ENCODE measurements at regions of chr5 and their contacts with region 1.

Region 1: DNA sequence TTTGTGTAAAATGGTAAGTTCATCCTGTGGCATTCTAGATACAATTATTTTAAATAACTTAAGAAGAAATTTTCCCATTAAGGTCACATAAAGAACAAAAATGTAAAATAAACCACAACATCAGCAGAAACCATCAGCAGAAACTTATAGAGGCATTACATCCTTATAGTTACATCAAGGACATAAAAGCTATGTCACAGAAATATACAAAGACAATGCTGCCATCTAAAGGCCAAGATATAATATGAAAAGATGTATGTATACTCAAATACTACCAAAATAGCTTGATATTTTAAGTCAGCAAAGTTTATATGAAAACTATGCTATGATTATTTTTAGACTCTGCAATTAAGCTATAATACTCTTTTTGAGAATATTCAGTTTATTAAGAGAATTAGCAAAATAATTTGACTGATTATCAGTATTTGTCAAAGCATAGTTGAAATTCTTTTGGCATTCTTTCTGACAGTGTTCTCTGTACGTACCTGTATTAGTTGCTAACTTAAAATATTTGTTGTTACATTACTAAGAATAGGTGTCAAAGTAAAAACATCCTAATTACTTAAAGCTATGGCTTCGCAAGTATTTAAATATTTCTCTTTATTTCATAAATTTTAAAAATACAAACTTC is 36.2 kb downstream of the FBXL17 start:
- DNase-seq: no peak
- H3K4me3 Mint-ChIP-seq: no peak overlapping the region
- H3K27ac Mint-ChIP-seq: no peak overlapping the region
- H3K4me1 Mint-ChIP-seq: no peaks in the 10 kb centered on the region
- H3K27me3 Mint-ChIP-seq: no peaks in the 10 kb centered on the region

Region 2: GRCh38 chr5:107673368-107674136 is 672.1 kb before region 1 on chr5:
- intact Hi-C with region 1: loop called (anchors 10 kb)
- DNase-seq: peak; percentile 44
- H3K4me3 Mint-ChIP-seq: peak overlapping the region; percentile 68
- H3K27ac Mint-ChIP-seq: peak overlapping the region; percentile 32
- H3K4me1 Mint-ChIP-seq: peaks cover 22% of the 10 kb centered on the region
- H3K27me3 Mint-ChIP-seq: peaks cover 63% of the 10 kb centered on the region

Region 3: GRCh38 chr5:108148715-108149139 is 196.9 kb before region 1 on chr5:
- intact Hi-C with region 1: loop called (anchors 5 kb)
- DNase-seq: no peak
- H3K4me3 Mint-ChIP-seq: no peak overlapping the region
- H3K27ac Mint-ChIP-seq: no peak overlapping the region
- H3K4me1 Mint-ChIP-seq: peaks cover 5% of the 10 kb centered on the region
- H3K27me3 Mint-ChIP-seq: no peaks in the 10 kb centered on the region

Region 4: DNA sequence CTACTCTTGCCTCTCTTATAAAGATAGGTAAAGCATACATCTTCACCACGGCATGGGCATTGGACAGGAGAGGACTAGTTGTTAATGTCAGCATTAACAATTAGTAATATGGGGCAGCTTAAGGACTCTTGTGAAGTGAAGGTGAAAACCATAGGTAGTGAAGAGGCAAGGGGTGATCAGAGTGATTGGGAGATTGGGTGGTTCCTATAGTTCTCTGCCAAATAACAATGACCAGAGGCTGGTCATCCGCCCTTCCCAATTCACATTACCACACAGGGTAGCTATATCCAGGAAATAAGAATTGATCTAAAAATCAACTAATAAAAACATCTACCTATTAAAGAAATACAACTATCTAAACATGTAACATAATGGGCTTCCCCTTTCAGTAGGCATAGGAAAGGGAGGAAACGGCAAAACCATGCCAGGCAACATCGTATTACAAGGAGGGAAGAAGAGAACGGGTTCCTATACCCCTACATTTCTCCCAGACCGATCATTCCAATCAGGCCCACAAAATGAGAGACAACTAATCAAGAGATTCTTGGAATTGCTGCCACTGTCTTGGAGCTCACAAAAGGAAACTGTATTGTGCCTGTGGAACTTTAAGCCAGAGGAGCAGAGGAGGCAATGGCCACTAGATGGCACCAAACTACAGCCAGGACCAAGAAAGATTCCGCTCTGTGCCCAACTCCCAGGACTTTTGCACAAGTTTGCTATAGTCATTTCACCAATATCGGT is 85.4 kb before region 1 on chr5:
- intact Hi-C with region 1: loop called (anchors 1 kb)
- DNase-seq: peak; percentile 21
- H3K4me3 Mint-ChIP-seq: no peak overlapping the region
- H3K27ac Mint-ChIP-seq: no peak overlapping the region
- H3K4me1 Mint-ChIP-seq: no peaks in the 10 kb centered on the region
- H3K27me3 Mint-ChIP-seq: no peaks in the 10 kb centered on the region

Region 5: DNA sequence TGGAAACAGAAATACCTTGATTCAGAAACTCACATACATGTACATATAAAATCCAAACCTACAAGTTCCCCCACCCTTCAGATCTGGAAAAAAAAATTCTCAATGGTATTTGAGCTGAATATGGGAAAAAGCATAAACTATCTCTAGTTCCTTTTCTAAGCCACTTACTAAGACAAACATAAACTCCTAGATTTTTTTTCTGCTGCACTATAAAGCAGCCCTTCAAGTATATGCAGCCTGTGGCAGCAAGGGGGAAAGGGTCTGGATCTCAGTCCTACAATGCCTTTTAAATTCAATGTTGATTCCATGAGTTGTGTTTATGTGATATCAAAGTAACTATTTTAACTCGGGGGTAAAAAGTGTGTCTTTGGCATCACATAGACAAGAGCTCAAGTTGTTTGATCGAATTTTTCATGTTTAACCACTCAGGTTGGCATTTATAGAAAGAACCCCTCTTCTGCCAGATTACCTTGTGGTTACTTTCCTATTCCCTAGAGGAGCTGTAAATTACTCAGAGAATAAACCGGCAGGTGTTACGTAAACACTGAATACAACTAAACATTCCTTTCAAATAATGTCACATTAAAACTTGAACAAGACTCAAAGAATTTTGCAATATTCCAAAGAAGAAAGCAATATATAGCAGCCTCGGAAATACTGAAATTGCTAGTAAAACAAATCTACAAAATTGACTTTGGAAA is 310.2 kb after region 1 on chr5:
- intact Hi-C with region 1: no loop called
- DNase-seq: no peak
- H3K4me3 Mint-ChIP-seq: no peak overlapping the region
- H3K27ac Mint-ChIP-seq: no peak overlapping the region
- H3K4me1 Mint-ChIP-seq: no peaks in the 10 kb centered on the region
- H3K27me3 Mint-ChIP-seq: peaks cover 11% of the 10 kb centered on the region